ENCODE measurements at regions of chr2 and their contacts with region 1.

Region 1: DNA sequence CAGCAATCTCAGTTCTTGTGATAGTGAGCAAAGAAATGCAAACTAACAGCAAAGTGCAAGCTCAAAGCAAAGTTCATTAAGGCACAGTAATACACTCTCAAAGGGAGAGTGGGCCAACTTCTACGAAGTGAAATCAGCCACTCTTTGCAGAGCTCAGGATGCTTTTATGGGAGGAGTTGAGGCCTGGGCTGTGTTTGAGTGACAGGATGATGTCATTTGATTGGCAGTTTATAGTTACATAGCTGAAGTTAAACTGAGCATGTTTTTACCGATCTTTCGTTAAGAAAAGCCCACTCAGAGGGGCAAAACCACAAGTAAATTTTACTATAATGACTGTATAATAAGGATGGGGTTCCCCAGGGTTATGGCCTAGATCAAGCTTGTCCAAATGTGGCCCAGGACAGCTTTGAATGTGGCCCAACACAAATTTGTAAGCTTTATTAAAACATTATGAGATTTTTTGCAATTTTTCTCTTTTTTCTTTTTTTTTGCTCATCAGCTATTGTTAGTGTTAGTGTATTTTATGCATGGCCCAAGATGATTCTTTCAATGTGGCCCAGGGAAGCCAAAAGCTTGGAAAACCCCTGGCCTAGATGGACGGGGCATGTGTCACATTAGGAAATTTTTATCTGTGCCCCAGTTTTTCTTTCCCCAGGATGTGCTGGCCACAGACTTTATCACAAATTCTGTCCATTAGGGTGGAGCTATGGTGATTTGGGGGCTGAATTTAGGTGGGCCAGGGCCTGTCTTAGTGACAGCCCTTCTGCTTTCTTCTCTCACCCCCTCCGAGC is 8.3 kb upstream of the DNAH7 start:
- DNase-seq: no peak
- H3K4me3 Mint-ChIP-seq: no peak overlapping the region
- H3K27ac Mint-ChIP-seq: no peak overlapping the region
- H3K4me1 Mint-ChIP-seq: peaks cover 10% of the 10 kb centered on the region
- H3K27me3 Mint-ChIP-seq: no peaks in the 10 kb centered on the region

Region 2: GRCh38 chr2:195967336-195967735 is 109.6 kb before region 1 on chr2:
- CTCF ChIA-PET with region 1: no interaction called
- POLR2A ChIA-PET with region 1: no interaction called
- DNase-seq: no peak
- H3K4me3 Mint-ChIP-seq: no peak overlapping the region
- H3K27ac Mint-ChIP-seq: no peak overlapping the region
- H3K4me1 Mint-ChIP-seq: no peaks in the 10 kb centered on the region
- H3K27me3 Mint-ChIP-seq: peaks cover 3% of the 10 kb centered on the region

Region 3: DNA sequence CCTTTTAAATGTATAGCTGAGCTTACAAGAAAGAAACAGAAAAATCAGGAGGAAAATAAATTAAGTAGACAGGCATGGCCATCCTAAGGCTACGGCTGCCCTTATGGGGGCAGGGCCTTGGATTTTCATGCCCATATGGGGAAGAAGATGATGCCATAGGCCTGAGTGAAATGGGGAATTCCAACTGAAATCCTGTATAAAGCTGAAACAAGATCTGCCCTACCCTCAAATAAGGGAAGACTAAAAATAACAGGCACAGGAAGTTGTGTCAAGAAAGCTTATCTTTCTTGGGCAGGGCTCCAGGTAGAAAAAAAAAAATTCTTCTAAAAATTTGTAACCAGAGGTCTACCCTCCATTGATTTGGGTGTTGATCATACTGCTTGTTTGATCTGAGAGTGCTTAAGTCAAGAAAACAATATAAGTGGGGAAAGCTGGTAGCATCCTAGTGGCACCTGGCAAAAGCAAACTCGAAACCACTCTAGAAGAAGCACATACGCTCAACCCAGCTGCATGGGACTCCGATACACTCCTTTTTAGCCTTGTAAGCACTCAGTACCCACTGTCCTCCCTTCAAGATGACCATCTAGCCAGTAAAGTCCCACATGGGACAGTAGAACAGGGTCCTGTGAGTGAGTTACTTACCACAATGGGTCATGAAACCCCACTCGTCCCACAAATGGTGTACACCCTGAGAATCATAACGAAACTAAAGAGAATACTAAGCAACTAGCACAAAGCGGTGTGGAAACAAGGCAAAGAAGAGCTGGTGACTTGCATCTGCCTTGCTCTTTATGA is 30.7 kb before region 1 on chr2:
- CTCF ChIA-PET with region 1: no interaction called
- POLR2A ChIA-PET with region 1: no interaction called
- DNase-seq: no peak
- H3K4me3 Mint-ChIP-seq: no peak overlapping the region
- H3K27ac Mint-ChIP-seq: no peak overlapping the region
- H3K4me1 Mint-ChIP-seq: peaks cover 4% of the 10 kb centered on the region
- H3K27me3 Mint-ChIP-seq: peaks cover 11% of the 10 kb centered on the region

Region 4: DNA sequence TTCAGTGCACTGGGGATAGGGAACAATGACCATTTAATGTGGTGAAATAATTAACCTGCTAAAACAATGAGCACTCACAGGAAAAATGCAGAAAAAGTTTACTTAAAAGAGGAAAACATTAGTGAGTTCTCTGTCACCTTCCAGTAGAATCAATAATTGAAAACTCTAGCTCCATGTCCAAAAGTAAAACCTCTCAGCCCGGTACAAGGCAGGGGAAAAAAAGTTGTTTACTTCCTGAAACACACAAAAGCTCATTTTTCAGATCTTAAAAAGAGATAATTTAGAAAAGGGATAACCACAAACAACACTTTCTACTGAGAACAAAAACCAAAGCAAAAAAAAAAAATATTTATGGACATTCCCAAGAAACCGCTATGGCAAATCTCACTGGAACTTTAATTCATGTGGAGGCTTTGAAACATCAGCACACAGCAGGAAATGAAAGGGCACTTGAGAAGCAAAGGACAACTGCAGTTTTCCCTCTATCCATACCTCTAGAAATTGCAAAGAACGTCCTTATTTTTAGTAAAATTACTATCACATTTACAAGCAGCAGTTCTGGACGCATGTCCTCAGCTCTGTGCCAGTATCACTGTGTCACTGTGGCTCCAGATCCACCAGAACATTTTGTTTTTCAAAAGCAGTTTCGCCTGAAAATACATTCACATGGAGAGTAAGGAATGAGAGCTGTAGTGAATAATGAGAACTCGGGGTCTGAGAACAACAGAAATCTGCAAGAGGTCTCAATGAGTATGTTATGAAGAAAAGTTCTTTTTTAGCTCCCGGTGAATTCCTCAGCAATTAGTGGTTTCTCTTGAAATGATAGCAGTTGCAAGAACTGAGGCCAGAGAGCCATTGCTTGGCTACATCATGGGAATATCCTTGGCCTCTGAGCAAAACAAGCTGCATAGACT is 36.3 kb after region 1 on chr2:
- CTCF ChIA-PET with region 1: interaction called, 19 read pairs
- POLR2A ChIA-PET with region 1: no interaction called
- DNase-seq: no peak
- H3K4me3 Mint-ChIP-seq: no peak overlapping the region
- H3K27ac Mint-ChIP-seq: no peak overlapping the region
- H3K4me1 Mint-ChIP-seq: peaks cover 10% of the 10 kb centered on the region
- H3K27me3 Mint-ChIP-seq: no peaks in the 10 kb centered on the region

Region 5: DNA sequence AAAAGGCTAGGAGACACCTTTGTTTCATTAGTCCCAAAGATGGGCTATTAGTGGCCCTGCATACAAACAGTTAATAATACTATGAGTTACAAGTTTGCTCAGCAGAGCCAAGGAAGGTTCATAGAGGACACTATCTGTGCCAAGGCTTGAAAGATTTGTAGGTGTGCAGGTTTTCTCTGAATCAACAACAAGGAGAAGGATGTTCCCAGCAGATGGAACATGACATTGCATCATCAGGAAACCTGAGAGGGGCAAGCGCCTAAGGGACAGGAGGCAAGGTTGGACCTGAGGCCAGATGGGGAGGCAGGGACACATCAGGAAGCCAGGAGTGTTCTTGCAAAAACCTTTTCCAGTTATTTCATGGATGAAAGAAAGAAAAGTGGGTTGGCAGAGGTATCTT is 129.8 kb after region 1 on chr2:
- CTCF ChIA-PET with region 1: no interaction called
- POLR2A ChIA-PET with region 1: no interaction called
- DNase-seq: no peak
- H3K4me3 Mint-ChIP-seq: no peak overlapping the region
- H3K27ac Mint-ChIP-seq: no peak overlapping the region
- H3K4me1 Mint-ChIP-seq: peaks cover 42% of the 10 kb centered on the region
- H3K27me3 Mint-ChIP-seq: no peaks in the 10 kb centered on the region

Region 6: DNA sequence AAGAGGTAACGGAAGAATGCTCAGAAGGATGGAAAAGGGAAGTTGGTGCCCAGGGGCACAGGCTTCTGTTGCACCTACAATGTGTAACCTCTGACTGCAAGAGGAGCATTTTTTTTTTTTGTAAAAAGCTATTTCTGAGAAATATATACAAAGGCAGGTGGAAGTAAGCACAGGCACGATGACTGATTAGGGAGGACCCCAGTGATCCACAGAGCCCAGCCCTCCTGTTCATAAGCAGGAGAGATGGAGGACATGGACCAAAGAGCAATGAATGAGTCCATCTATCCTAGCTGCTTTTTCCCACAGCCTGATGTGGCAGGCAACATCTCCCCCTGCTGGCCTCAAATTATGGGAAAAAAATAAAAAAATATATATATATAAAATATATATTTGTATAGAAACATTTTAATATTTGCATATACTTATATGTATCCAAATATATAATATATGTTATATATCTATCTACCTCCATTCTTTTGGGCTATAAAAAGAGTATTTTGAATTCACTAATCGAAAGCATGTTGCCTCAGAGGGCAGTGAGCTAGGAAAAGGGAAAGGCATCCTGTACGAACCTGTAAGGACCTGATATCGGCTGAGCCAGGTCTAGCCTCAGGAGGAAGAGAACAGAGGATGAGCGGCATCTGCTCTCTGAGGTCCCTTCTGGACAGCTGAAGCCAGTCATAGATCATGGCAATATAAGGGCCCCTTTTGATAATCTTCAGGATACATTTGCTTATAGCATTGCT is 260.4 kb after region 1 on chr2:
- CTCF ChIA-PET with region 1: interaction called, 164 read pairs
- POLR2A ChIA-PET with region 1: interaction called, 7 read pairs
- DNase-seq: peak; percentile 23
- H3K4me3 Mint-ChIP-seq: no peak overlapping the region
- H3K27ac Mint-ChIP-seq: no peak overlapping the region
- H3K4me1 Mint-ChIP-seq: peaks cover 2% of the 10 kb centered on the region
- H3K27me3 Mint-ChIP-seq: peaks cover 7% of the 10 kb centered on the region